ENCODE measurements at regions of chr18 and their contacts with region 1.

Region 1: DNA sequence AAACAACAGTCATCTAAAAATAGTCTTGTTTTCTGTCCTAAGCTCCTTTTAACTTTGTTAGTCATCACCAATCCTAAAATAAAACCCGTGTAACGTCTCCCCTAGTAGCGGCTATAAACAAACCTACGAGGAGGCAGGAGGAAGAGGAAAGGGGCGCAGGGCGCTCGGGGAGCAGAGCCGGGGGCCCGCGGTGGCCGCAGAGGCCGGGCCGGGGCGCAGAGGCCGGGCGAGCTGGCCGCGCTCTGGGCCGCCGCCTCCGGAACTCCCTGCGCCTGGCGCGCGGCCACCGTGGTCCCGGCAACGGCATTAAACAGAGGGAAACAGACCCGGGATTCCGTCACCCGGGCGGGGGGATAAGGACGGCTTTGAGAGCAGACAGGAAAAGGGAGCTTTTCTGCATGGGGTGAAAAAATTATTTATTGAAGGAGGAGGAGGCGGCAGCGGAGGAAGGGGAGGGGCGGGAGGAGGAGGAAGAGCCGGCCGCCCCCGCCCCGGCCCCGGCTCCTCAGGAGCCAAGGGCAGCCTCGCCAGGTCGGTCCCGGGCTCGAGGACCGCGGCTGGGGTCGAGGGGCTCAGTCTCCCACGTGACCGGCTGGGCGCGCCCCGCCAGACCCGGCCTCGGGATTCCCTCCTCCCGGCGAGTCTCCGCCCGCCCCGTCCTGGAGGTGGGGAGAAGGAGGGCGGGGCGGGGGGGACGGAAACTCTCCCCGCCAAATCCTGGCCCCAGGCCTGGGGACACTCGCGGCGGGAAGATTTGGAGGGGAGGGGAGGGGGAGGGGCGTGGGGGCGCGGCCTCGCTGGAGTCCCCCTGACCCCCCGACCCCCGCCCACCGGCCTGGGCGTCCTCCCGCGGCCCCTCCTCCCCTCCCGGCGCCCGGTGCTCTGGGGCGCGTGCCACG is 1.8 kb upstream of the NFATC1 start:
- DNase-seq: no peak
- ATAC-seq: peak; percentile 35
- H3K4me3 ChIP-seq: peak overlapping the region; percentile 68
- H3K27ac ChIP-seq: no peak overlapping the region
- H3K4me1 ChIP-seq: peaks cover 12% of the 10 kb centered on the region
- H3K27me3 ChIP-seq: peaks cover 2 to 21% of the 10 kb centered on the region in 2 experiments; a peak in 3 of 4 replicates
- CTCF ChIP-seq: no peak
- EP300 ChIP-seq: no peak
- POLR2A ChIP-seq: no peak
- RAD21 ChIP-seq: no peak

Region 2: GRCh38 chr18:79275992-79276391 is 117.9 kb before region 1 on chr18:
- CTCF ChIA-PET with region 1: no interaction called
- POLR2A ChIA-PET with region 1: no interaction called
- RAD21 ChIA-PET with region 1: no interaction called
- SMC1A ChIA-PET with region 1: no interaction called
- in situ Hi-C with region 1: no loop called
- intact Hi-C with region 1: no loop called
- DNase-seq: peak; percentile 37
- ATAC-seq: peak; percentile 68
- H3K4me3 ChIP-seq: no peak overlapping the region
- H3K27ac ChIP-seq: peak overlapping the region; percentile 80; the same call in 1 of the 2 replicates
- H3K4me1 ChIP-seq: peaks cover 15% of the 10 kb centered on the region
- H3K27me3 ChIP-seq: no peaks in the 10 kb centered on the region
- CTCF ChIP-seq: no peak
- EP300 ChIP-seq: no peak
- POLR2A ChIP-seq: no peak
- RAD21 ChIP-seq: no peak

Region 3: GRCh38 chr18:79528846-79529245 is 135.0 kb after region 1 on chr18:
- CTCF ChIA-PET with region 1: interaction called, 31 read pairs
- POLR2A ChIA-PET with region 1: interaction called, 16 read pairs
- RAD21 ChIA-PET with region 1: interaction called, 38 read pairs
- SMC1A ChIA-PET with region 1: interaction called, 22 read pairs
- in situ Hi-C with region 1: no loop called
- intact Hi-C with region 1: loop called (anchors 5 kb)
- DNase-seq: no peak
- ATAC-seq: peak; percentile 59
- H3K4me3 ChIP-seq: no peak overlapping the region
- H3K27ac ChIP-seq: no peak overlapping the region
- H3K4me1 ChIP-seq: peaks cover 9% of the 10 kb centered on the region
- H3K27me3 ChIP-seq: no peaks in the 10 kb centered on the region
- CTCF ChIP-seq: peak; percentile 83 to 93 (median 84)
- EP300 ChIP-seq: no peak
- POLR2A ChIP-seq: no peak
- RAD21 ChIP-seq: peak; percentile 99

Region 4: DNA sequence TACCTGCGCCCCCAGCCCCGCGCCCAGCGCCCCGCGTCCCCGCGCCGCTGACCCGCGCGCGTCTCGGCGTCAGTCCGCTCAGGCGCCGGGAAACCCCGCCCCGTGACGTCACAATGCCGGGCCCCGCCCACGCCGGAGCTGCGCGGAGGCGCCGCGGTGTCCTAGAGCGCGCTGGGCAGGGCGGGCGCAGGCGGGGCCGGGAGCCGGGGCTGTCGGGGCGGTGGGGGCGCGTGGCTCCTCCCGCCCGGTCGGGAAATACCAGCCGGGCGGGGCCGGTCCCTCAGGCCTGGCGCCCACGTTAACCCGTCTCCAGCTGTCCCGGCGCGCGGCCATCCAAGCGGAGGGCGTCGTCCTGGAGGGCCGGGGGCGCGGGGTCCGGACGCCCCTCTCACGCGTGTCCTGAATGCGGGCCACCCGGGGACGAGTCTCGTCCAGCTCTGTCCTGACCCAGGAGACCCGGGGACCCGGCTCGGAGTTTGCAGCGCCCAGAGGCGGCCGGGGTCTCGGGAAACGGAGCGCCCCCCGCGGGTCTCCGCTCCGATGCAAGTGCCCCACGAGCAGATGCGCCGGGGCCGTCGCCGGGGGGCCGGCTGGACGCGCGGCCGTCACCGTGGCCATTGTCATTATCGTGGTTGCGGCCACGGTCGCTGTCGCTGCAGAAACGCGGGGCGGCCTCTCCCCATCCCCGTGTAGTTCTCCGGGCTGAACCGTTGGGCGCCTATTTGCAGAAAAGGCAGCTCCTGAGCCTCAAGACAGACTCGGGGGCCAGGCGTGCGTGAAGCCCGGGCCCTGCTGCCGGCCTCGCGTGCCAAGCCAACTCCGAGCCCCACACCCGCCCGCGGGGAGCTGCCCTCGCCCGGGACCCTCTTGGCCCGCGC is 557.9 kb after region 1 on chr18 and contains the start of gene SLC66A2:
- CTCF ChIA-PET with region 1: no interaction called
- POLR2A ChIA-PET with region 1: no interaction called
- RAD21 ChIA-PET with region 1: no interaction called
- SMC1A ChIA-PET with region 1: interaction called, 3 read pairs
- in situ Hi-C with region 1: loop called (anchors 10 kb)
- intact Hi-C with region 1: no loop called
- DNase-seq: no peak
- ATAC-seq: peak; percentile 87
- H3K4me3 ChIP-seq: peak within 1 kb of the TSS; percentile 84
- H3K27ac ChIP-seq: peak within 1 kb of the TSS; percentile 75
- H3K4me1 ChIP-seq: peaks cover 14% of the 10 kb centered on the region
- H3K27me3 ChIP-seq: no peaks in the 10 kb centered on the region
- CTCF ChIP-seq: no peak
- EP300 ChIP-seq: no peak
- POLR2A ChIP-seq: peak; percentile 65; the same call in 1 of the 2 replicates
- RAD21 ChIP-seq: no peak
- polyA plus RNA-seq, gene SLC66A2: 0.69 to 2.7 TPM